ENCODE measurements at regions of chr1 and their contacts with region 1.

Region 1: GRCh38 chr1:167697667-167698141 is 24.1 kb upstream of the MPZL1 start:
- DNase-seq: no peak
- ATAC-seq: peak in 1 of 2 experiments; percentile 17; a peak in 1 of 6 replicates
- H3K4me3 ChIP-seq: no peak overlapping the region
- H3K27ac ChIP-seq: no peak overlapping the region
- H3K4me1 ChIP-seq: no peaks in the 10 kb centered on the region
- CTCF ChIP-seq: no peak
- EP300 ChIP-seq: no peak
- POLR2A ChIP-seq: no peak
- RAD21 ChIP-seq: no peak

Region 2: GRCh38 chr1:167599957-167600581 is 97.6 kb before region 1 on chr1:
- CTCF ChIA-PET with region 1: interaction called, 25 read pairs
- POLR2A ChIA-PET with region 1: no interaction called
- DNase-seq: peak in 1 of 2 experiments; percentile 42
- ATAC-seq: peak; percentile 86 to 87
- H3K4me3 ChIP-seq: no peak overlapping the region
- H3K27ac ChIP-seq: 0 out of 6 replicates have a peak overlapping the region, but pooled peaks of 1 of the 2 experiments have one; percentile 0
- H3K4me1 ChIP-seq: peaks cover 15% of the 10 kb centered on the region; the same call in 2 of the 3 replicates
- CTCF ChIP-seq: peak; percentile 71
- EP300 ChIP-seq: no peak
- POLR2A ChIP-seq: no peak
- RAD21 ChIP-seq: peak; percentile 81 to 82

Region 3: DNA sequence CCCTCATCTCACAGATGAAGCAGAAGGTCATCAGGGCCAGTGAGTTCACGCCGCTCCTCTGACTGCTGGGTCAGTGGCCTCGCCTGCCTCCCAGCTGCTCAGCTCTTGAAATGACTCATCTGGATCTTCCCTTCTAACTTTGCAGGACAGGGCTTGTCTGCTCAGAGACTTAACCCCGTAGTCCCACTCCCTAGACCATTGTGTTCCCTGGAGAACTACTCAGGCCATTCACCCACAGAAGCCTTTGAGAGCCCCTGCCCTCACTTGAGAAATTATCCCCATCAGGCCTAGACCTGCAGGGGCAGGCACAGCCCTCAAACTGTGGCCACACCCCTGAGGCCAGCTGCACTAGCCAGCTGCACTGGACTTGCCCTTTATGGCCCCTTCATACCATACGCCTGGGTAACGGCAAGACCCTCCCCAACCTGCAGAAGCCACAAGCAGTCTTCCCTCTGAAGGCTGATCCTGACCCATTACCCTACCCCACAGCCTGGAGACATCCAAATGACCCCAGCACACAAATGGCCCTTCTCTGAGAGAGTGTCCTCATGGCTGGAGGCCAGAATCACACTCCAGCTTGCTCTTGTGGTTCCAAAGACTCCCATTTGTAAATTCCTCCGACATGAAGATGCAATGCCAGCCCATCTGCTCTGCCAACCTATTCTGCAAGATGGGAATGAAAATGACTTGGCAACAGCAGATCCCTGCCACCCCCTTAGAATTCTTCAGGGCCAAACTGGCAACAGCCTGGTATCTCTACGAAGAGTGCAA is 34.5 kb before region 1 on chr1:
- CTCF ChIA-PET with region 1: no interaction called
- POLR2A ChIA-PET with region 1: no interaction called
- DNase-seq: peak; percentile 49 to 57
- ATAC-seq: peak; percentile 82 to 87
- H3K4me3 ChIP-seq: no peak overlapping the region
- H3K27ac ChIP-seq: peak overlapping the region; percentile 37 to 75
- H3K4me1 ChIP-seq: peaks cover 35% of the 10 kb centered on the region
- CTCF ChIP-seq: no peak
- EP300 ChIP-seq: no peak
- POLR2A ChIP-seq: no peak
- RAD21 ChIP-seq: no peak

Region 4: GRCh38 chr1:167708940-167709389 is 11.3 kb after region 1 on chr1:
- CTCF ChIA-PET with region 1: interaction called, 14 read pairs
- POLR2A ChIA-PET with region 1: no interaction called
- DNase-seq: no peak
- ATAC-seq: no peak
- H3K4me3 ChIP-seq: no peak overlapping the region
- H3K27ac ChIP-seq: no peak overlapping the region
- H3K4me1 ChIP-seq: no peaks in the 10 kb centered on the region
- CTCF ChIP-seq: no peak
- EP300 ChIP-seq: no peak
- POLR2A ChIP-seq: no peak
- RAD21 ChIP-seq: no peak

Measured in A549 (cell line).